ENCODE measurements at regions of chr18 and their contacts with region 1.

Region 1: GRCh38 chr18:56563568-56563967 is 74.8 kb downstream of the TXNL1 start:
- DNase-seq: no peak
- H3K4me3 ChIP-seq: no peak overlapping the region
- H3K27ac ChIP-seq: no peak overlapping the region
- H3K4me1 ChIP-seq: no peaks in the 10 kb centered on the region
- H3K27me3 ChIP-seq: no peaks in the 10 kb centered on the region
- CTCF ChIP-seq: no peak
- EP300 ChIP-seq: no peak
- POLR2A ChIP-seq: no peak

Region 2: GRCh38 chr18:55234366-55235093 is 1329.0 kb before region 1 on chr18:
- in situ Hi-C with region 1: loop called in 1 of 4 experiments (anchors 25 kb)
- intact Hi-C with region 1: no loop called
- DNase-seq: peak; percentile 78
- H3K4me3 ChIP-seq: no peak overlapping the region
- H3K27ac ChIP-seq: peak overlapping the region; percentile 1 to 15 (median 2)
- H3K4me1 ChIP-seq: peaks cover 0 to 5% (median 0%) of the 10 kb centered on the region in 4 donors
- H3K27me3 ChIP-seq: no peaks in the 10 kb centered on the region
- CTCF ChIP-seq: peak; percentile 66 to 81 (median 70)
- EP300 ChIP-seq: no peak
- POLR2A ChIP-seq: no peak

Region 3: DNA sequence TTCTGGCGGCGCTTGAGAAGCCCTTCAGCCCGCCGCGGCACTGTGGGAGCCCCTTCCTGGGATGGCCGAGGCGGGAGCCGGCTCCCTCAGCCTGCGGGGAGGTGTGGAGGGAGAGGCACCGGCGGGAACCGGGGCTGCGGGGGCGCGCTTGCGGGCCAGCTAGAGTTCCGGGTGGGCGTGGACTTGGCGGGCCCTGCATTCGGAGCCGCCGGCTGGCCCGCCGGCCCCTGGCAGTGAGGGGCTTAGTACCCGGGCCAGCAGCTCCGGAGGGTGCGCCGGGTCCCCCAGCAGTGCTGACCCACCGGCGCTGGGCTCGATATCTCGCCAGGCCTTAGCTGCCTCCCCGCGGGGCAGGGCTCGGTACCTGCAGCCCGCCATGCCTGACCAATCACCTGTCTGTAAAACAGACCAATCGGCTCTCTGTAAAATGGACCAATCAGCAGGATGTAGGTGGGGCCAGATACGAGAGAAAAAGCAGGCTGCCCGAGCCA is 898.7 kb before region 1 on chr18:
- in situ Hi-C with region 1: no loop called
- intact Hi-C with region 1: no loop called
- DNase-seq: no peak
- H3K4me3 ChIP-seq: no peak overlapping the region
- H3K27ac ChIP-seq: no peak overlapping the region
- H3K4me1 ChIP-seq: no peaks in the 10 kb centered on the region
- H3K27me3 ChIP-seq: no peaks in the 10 kb centered on the region
- CTCF ChIP-seq: no peak
- EP300 ChIP-seq: no peak
- POLR2A ChIP-seq: no peak

Region 4: DNA sequence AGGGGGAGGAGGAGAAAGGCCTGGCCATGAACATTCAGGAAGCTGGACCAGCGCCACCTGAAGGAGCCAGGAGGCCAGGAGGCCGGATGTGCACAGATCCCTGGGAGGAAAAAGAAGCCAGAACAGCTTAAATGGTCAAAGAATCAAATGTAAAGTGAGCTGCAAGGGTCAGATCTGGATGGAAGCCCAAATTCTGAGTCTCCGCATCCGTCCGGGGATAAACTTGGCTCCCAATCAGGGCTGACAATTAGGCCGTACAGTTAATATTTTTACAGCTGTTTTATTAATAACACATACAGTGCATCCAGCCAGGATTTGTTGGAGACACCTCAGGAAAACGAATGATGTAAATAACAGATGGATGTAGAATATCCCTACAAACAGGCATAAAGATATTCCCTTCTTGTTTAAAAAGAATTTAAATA is 480.5 kb before region 1 on chr18:
- in situ Hi-C with region 1: loop called in 1 of 4 experiments (anchors 25 kb)
- intact Hi-C with region 1: no loop called
- DNase-seq: no peak
- H3K4me3 ChIP-seq: no peak overlapping the region
- H3K27ac ChIP-seq: peak overlapping the region in 1 of 4 donors; percentile 11
- H3K4me1 ChIP-seq: no peaks in the 10 kb centered on the region
- H3K27me3 ChIP-seq: no peaks in the 10 kb centered on the region
- CTCF ChIP-seq: no peak
- EP300 ChIP-seq: no peak
- POLR2A ChIP-seq: no peak

Region 5: GRCh38 chr18:56458770-56459712 is 104.5 kb before region 1 on chr18:
- in situ Hi-C with region 1: loop called in 1 of 4 experiments (anchors 25 kb)
- intact Hi-C with region 1: no loop called
- DNase-seq: no peak
- H3K4me3 ChIP-seq: no peak overlapping the region
- H3K27ac ChIP-seq: no peak overlapping the region
- H3K4me1 ChIP-seq: peaks cover 0 to 4% (median 0%) of the 10 kb centered on the region in 4 donors
- H3K27me3 ChIP-seq: no peaks in the 10 kb centered on the region
- CTCF ChIP-seq: no peak
- EP300 ChIP-seq: no peak
- POLR2A ChIP-seq: no peak

Measured in transverse colon (tissue), 4 donors.